Activated T-helper 1 cell treated with anti-CD3 and anti-CD28 coated beads, Interleukin-12 subunit alpha, Interleukin-12 subunit beta, Interleukin-2, Interleukin-4 antibody, amounts not matched to agents 30 ng/mL and 10 ng/mL and 1 ng/mL, durations not matched to agents 14 hours and 24 hours and 36 hours (primary cell): ENCODE measurements at regions of chr9 and their contacts with region 1.

Region 1: DNA sequence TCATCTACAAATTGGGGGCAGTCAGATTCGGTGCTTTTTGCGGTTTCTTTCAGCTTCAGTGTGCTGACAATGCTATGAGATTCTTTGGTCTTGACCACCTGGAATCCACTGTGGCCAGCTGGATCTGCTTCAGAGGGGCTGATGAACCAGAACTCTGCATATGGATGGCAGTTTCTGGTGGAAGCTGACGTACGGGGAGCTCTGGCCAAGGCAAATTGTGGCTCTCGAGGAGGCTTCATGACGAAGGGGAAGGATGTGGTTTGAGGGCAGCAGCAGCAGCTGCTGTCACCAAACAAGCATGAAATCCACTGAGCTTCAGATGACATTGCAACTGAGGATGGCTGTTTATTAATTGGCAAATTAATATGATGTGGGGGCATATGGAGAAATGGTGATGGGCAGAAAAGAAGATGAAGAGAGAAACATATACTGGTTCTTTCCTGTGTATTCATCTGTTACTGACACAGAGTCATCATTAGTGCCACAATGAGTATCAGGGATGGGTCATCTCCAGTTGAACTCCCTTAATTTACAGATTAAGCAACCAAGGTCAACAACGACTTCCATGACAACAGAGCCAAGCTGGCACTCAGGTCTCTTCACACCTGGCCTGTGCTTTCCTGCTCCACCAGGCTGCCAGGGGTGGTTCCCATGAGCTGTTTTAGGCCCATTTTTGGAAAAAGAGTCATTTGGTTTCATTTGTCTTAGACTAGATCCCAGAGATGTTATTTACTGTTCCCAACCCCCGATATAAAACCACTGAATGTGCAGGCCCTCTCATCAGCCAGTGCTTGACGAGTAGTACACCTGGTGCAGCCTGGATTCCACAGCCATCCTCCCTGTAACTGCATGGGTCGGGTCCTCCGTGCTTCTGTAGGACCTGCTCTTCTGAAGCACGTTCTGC is 134.7 kb downstream of the AOPEP start:
- DNase-seq: peak; percentile 70
- H3K4me3 Mint-ChIP-seq: peak overlapping the region; percentile 73
- H3K27ac Mint-ChIP-seq: peak overlapping the region; percentile 83
- H3K4me1 Mint-ChIP-seq: peaks cover 48% of the 10 kb centered on the region
- H3K27me3 Mint-ChIP-seq: no peaks in the 10 kb centered on the region

Region 2: GRCh38 chr9:94802793-94803192 is 58.4 kb before region 1 on chr9:
- intact Hi-C with region 1: loop called (anchors 1 kb)
- DNase-seq: peak; percentile 4
- H3K4me3 Mint-ChIP-seq: peak overlapping the region; percentile 28
- H3K27ac Mint-ChIP-seq: peak overlapping the region; percentile 66
- H3K4me1 Mint-ChIP-seq: peaks cover 40% of the 10 kb centered on the region
- H3K27me3 Mint-ChIP-seq: no peaks in the 10 kb centered on the region